ENCODE measurements at regions of chr11 and their contacts with region 1.

Region 1: GRCh38 chr11:66045177-66045639 is 3.8 kb downstream of the GAL3ST3 start:
- DNase-seq: no peak
- H3K4me3 ChIP-seq: no peak overlapping the region
- H3K27ac ChIP-seq: no peak overlapping the region
- H3K27me3 ChIP-seq: peaks cover 9% of the 10 kb centered on the region
- CTCF ChIP-seq: peak; percentile 91

Region 2: GRCh38 chr11:66059966-66060680 is 14.9 kb after region 1 on chr11:
- CTCF ChIA-PET with region 1: interaction called, 20 read pairs
- POLR2A ChIA-PET with region 1: no interaction called
- DNase-seq: no peak
- H3K4me3 ChIP-seq: no peak overlapping the region
- H3K27ac ChIP-seq: no peak overlapping the region
- H3K27me3 ChIP-seq: no peaks in the 10 kb centered on the region
- CTCF ChIP-seq: no peak

Region 3: GRCh38 chr11:66282468-66283386 is 237.5 kb after region 1 on chr11:
- CTCF ChIA-PET with region 1: no interaction called
- POLR2A ChIA-PET with region 1: no interaction called
- DNase-seq: peak; percentile 82
- H3K4me3 ChIP-seq: no peak overlapping the region
- H3K27ac ChIP-seq: no peak overlapping the region
- H3K27me3 ChIP-seq: no peaks in the 10 kb centered on the region
- CTCF ChIP-seq: peak; percentile 83

Region 4: GRCh38 chr11:66311965-66312548 is 266.8 kb after region 1 on chr11:
- CTCF ChIA-PET with region 1: no interaction called
- POLR2A ChIA-PET with region 1: no interaction called
- DNase-seq: peak; percentile 84
- H3K4me3 ChIP-seq: peak overlapping the region; percentile 74
- H3K27ac ChIP-seq: peak overlapping the region; percentile 89
- H3K27me3 ChIP-seq: peaks cover 7% of the 10 kb centered on the region
- CTCF ChIP-seq: peak; percentile 94

Measured in AG04450 (cell line).